Lower leg skin (tissue), 4 donors: ENCODE measurements at regions of chr12 and their contacts with region 1.

Region 1: GRCh38 chr12:12704593-12705230 is 8.7 kb upstream of the GPR19 start:
- DNase-seq: peak in 1 of 2 donors; percentile 63
- H3K4me3 ChIP-seq: no peak overlapping the region
- CTCF ChIP-seq: peak in 1 of 3 donors; percentile 92
- POLR2A ChIP-seq: no peak

Region 2: DNA sequence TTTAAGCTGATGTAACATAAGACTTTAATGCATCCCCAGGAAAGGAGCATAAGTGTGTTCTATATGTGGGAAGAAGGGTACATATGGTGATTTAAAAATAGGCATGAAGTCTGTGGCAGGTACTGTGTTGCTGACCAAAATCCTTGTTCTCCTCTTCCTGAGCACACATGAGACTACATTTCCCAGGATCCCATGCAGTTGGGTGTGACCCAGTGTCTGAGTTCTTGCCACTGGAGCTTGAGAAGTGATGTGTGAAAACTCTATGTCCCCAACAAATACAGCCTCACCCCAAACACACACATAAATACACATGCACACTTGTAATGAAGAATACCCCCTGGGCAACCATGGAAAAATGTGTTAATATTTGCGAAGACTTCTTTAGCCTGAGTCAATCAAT is 1542.2 kb before region 1 on chr12:
- intact Hi-C with region 1: no loop called
- DNase-seq: no peak
- H3K4me3 ChIP-seq: no peak overlapping the region
- CTCF ChIP-seq: no peak
- POLR2A ChIP-seq: no peak

Region 3: GRCh38 chr12:12376646-12377448 is 327.9 kb before region 1 on chr12:
- intact Hi-C with region 1: loop called (anchors 5 kb)
- DNase-seq: no peak
- H3K4me3 ChIP-seq: no peak overlapping the region
- CTCF ChIP-seq: no peak
- POLR2A ChIP-seq: no peak

Region 4: DNA sequence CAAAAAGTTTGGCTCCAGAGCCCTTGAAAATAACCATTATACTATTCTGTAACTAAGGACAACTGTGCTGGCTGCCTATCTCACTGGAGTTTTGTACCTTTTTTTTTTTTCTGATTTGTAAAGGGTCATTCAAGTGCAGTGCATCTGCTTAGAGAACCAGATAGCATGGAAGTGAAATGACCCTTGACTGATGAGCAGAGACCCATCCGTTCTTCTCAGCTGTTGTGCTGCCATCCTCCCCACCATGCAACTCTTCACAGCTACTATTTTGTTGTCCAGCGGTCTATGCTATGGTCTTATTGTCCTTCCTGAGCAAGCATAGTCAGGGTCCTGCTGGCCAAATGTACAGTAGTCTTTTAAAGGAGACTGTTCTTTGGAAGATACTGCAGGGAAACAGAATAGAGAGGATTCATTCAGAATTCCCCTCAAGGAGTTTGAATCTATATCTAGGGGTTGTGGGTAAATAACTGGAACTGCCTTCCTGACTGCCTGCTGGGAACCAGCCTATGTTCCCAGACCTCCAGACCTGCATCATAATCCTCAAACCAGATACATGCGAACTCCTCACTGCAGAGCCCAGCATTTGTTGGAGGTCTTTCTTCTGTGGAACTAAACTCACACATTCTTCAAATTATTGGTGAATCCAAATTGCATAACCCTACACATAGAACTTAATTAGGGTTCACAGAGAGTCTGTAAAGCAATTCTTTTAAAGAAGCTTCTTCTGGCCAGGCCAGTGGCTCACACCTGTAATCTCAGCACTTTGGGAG is 49.8 kb before region 1 on chr12:
- intact Hi-C with region 1: no loop called
- DNase-seq: peak in 1 of 2 donors; percentile 8
- H3K4me3 ChIP-seq: no peak overlapping the region
- CTCF ChIP-seq: no peak
- POLR2A ChIP-seq: no peak

Region 5: DNA sequence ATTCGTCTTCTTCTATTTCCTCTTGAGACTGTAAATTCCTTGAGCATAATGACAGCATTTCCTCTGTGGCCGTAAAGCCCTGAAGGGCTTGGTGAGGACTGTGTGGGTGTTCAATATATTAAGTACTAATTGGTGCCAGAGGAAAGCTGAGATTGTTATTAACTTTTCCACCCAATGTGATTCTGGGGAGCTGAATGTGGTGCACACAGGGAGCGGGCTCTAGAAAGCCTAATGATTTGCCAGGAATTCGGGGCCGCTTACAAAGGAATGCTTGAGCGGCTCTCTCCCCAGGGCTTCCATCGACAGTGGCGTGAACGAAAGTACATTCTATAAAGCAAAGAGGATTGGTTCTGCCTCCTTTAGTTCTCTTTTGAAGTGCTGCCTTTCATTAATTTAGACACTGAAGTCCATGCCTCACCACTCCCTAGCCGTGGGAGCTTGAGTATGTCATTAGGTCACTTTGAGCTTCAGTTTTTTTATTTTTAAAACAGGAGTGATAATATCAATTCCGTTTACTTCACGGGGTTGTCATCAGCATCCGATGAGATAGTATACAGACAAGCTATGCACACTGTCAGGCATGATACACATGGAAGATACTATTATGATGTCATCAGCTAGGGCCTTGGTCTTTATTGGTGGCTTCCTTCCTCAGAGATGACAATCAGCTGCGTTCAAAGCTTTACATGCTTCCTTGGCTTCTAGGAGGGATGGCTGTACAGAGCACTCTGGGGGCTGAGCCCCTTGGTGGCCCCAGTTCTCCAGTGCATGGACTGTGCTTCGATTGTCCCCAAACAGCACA is 409.7 kb after region 1 on chr12:
- intact Hi-C with region 1: no loop called
- DNase-seq: no peak
- H3K4me3 ChIP-seq: no peak overlapping the region
- CTCF ChIP-seq: no peak
- POLR2A ChIP-seq: no peak